Activated T-helper 1 cell treated with anti-CD3 and anti-CD28 coated beads, Interleukin-12 subunit alpha, Interleukin-12 subunit beta, Interleukin-2, Interleukin-4 antibody, amounts not matched to agents 30 ng/mL and 10 ng/mL and 1 ng/mL, durations not matched to agents 14 hours and 24 hours and 36 hours (primary cell): ENCODE measurements at regions of chr11 and their contacts with region 1.

Region 1: GRCh38 chr11:117479372-117479771 is 151.7 kb downstream of the CEP164 start:
- DNase-seq: no peak
- H3K4me3 Mint-ChIP-seq: no peak overlapping the region
- H3K27ac Mint-ChIP-seq: no peak overlapping the region
- H3K4me1 Mint-ChIP-seq: no peaks in the 10 kb centered on the region
- H3K27me3 Mint-ChIP-seq: peaks cover 3% of the 10 kb centered on the region

Region 2: DNA sequence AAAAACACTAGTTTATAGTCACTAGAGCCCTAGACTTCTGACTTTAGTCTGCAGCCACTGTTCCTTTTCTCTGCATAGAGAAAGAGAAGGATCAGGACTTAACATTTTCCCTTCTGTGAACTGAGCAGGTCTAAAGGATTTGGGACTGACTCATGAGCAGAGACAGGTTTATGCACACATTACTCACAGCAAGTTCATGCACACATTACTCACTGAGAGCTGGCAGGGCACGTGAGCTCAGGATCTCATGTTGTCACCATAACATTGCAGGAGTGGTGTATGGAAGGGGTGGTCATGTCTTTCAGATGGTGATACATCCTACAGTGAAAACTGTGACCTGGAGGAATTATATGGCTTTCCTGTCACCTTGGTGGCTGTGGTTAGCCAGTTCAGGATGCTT is 95.3 kb before region 1 on chr11:
- intact Hi-C with region 1: no loop called
- DNase-seq: no peak
- H3K4me3 Mint-ChIP-seq: no peak overlapping the region
- H3K27ac Mint-ChIP-seq: no peak overlapping the region
- H3K4me1 Mint-ChIP-seq: no peaks in the 10 kb centered on the region
- H3K27me3 Mint-ChIP-seq: no peaks in the 10 kb centered on the region

Region 3: DNA sequence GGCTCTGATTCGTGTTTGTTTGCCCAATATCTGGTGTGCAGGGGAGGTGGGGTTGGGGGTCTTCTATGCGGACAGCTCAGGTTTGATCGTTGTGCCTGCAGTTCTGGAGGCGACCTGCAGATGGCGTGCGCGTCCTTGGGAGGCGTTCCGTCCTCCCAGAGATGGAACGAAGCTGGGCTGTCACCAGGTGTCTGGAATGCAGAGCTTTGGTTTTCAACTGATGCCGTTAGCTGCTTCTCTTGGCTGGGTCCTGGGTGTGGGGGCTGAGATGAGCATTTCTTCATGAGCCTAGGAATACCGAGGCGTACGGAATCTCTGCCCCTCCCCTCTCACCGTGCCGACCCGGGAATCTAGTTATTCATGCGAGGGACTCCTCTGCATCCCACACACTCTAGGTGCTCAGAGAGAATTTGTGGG is 53.1 kb before region 1 on chr11:
- intact Hi-C with region 1: loop called (anchors 2 kb)
- DNase-seq: peak; percentile 44
- H3K4me3 Mint-ChIP-seq: no peak overlapping the region
- H3K27ac Mint-ChIP-seq: no peak overlapping the region
- H3K4me1 Mint-ChIP-seq: no peaks in the 10 kb centered on the region
- H3K27me3 Mint-ChIP-seq: peaks cover 3% of the 10 kb centered on the region

Region 4: DNA sequence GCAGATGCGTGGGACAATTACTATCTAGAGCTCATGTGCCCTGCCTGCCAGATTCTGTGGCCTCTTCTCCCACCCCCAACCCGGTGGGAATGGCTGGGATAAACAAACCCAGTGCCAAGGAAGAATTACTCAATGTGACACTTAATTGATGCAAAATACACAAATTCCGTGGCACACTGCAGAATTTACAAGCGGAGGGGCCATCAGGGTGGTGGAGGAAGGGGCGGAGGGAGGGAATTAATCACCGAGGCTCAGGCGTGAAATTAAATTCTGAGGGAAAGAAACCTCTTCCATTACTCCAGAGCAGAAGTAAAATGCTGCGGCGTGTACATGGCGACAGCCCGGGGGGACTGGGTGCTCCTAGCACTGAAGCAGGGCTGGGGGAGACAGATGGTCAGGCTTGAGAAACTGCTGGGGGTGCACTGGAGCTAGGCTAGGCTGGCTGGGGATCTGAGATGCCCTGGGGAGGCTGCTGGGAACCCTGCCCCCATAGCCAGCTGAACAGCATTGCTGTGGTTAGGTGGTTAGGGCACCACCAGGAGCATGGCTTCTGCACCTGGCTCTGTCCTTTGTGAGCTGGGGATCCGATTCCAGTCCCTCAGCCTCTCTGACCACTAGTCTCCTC is 48.8 kb after region 1 on chr11:
- intact Hi-C with region 1: no loop called
- DNase-seq: no peak
- H3K4me3 Mint-ChIP-seq: no peak overlapping the region
- H3K27ac Mint-ChIP-seq: no peak overlapping the region
- H3K4me1 Mint-ChIP-seq: no peaks in the 10 kb centered on the region
- H3K27me3 Mint-ChIP-seq: peaks cover 13% of the 10 kb centered on the region

Region 5: DNA sequence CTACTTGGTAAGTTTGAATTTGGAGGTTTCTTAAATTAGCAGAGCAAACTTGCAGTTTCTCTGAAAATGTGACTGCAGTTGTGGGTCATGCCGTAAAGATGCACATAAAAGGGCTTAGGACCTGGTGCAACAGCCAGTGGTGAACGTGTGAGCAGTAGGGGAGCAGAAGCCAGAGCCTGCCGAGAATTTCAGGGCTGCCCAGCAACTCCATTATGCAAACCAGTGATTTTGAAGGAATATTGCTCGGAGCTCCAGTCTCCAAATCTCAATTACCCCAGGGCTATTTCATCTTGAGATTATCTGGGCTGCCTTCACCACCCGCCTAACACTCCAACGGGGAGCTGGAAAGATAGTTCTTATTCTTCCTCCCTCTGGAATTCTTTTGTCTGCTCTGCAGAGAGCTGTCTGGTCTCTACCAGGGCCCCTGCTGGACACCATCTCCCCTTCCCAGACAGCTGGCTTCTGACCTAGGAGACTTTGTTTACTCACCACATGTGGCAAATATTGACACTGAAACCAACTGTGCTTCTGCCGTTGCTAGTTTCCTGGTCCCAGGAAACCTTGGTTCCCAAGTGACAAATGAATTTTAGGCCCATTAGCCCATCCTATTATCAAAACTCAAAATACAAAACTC is 223.7 kb after region 1 on chr11:
- intact Hi-C with region 1: no loop called
- DNase-seq: no peak
- H3K4me3 Mint-ChIP-seq: no peak overlapping the region
- H3K27ac Mint-ChIP-seq: no peak overlapping the region
- H3K4me1 Mint-ChIP-seq: peaks cover 9% of the 10 kb centered on the region
- H3K27me3 Mint-ChIP-seq: peaks cover 12% of the 10 kb centered on the region

Region 6: DNA sequence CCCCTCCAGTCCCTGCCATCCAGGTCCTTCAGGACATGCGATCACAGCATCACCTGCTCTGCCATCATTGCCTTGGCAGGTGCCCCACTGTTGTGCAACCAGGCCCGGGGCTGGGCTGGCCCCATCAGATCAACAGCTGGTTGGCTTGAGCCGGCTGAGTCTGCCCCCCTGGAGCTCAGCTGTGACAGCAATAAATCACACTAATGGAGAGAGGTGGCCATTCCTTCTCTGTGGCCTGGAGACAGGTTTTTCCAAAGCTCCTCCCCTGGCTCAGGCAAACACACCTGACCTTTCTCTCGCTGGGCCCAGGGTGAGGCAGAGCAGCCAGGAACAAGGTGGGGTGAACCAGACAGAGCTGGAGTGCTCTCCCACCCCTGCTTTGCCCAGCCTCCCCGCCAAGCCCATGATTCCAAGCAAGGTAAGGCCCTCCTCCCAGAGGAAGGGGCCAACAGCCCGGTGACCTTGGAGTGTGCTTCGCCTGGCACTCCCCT is 354.1 kb after region 1 on chr11:
- intact Hi-C with region 1: no loop called
- DNase-seq: no peak
- H3K4me3 Mint-ChIP-seq: no peak overlapping the region
- H3K27ac Mint-ChIP-seq: no peak overlapping the region
- H3K4me1 Mint-ChIP-seq: peaks cover 48% of the 10 kb centered on the region
- H3K27me3 Mint-ChIP-seq: peaks cover 16% of the 10 kb centered on the region